ENCODE measurements at regions of chr6 and their contacts with region 1.

Region 1: DNA sequence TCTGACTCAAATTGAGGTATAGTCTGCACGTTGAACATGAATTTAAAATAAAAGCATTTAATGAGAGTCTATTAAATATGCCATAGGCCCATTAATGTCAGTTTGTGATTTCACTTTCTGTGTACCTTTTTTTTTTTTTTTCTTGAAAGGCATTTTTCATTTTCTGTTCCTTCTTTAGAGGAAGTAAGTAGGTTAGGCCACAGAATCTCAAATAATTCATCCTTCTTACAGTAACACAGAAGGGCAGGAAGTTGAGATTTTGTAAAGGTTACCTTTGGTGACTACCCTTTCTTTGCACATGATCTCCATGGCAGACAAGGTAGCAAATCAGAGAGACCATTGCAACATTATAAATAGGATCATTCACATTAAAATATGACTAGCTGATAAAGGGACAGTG is 9.6 kb downstream of the L3MBTL3 start:
- DNase-seq: no peak
- ATAC-seq: no peak
- H3K4me3 ChIP-seq: no peak overlapping the region
- H3K27ac ChIP-seq: no peak overlapping the region
- H3K4me1 ChIP-seq: peaks cover 3% of the 10 kb centered on the region
- H3K27me3 ChIP-seq: no peaks in the 10 kb centered on the region
- CTCF ChIP-seq: no peak
- POLR2A ChIP-seq: no peak
- RAD21 ChIP-seq: no peak

Region 2: GRCh38 chr6:129590408-129591022 is 437.4 kb before region 1 on chr6:
- CTCF ChIA-PET with region 1: no interaction called
- POLR2A ChIA-PET with region 1: no interaction called
- dilution Hi-C with region 1: no loop called
- in situ Hi-C with region 1: loop called (anchors 5 kb)
- intact Hi-C with region 1: no loop called
- DNase-seq: peak; percentile 99
- ATAC-seq: peak; percentile 78
- H3K4me3 ChIP-seq: no peak overlapping the region
- H3K27ac ChIP-seq: no peak overlapping the region
- H3K4me1 ChIP-seq: peaks cover 15% of the 10 kb centered on the region
- H3K27me3 ChIP-seq: no peaks in the 10 kb centered on the region
- CTCF ChIP-seq: 0 out of 2 replicates have a peak, but pooled peaks have one; percentile 14
- POLR2A ChIP-seq: no peak
- RAD21 ChIP-seq: no peak; the same call in 1 of the 2 replicates

Measured in IMR-90 (cell line).